T-cell (primary cell): ENCODE measurements at regions of chr6 and their contacts with region 1.

Region 1: GRCh38 chr6:90383196-90383822 is 86.7 kb upstream of the BACH2 start:
- DNase-seq: peak in 2 of 35 experiments; percentile 6 to 50
- ATAC-seq: peak; percentile 34 to 68 (median 64)
- H3K4me3 ChIP-seq: no peak overlapping the region
- H3K4me3 Mint-ChIP-seq: peak overlapping the region in 1 of 3 donors; percentile 45
- H3K27ac ChIP-seq: no peak overlapping the region
- H3K27ac Mint-ChIP-seq: peak overlapping the region; percentile 23 to 30
- H3K4me1 ChIP-seq: peaks cover 4 to 13% of the 10 kb centered on the region in 2 experiments
- H3K4me1 Mint-ChIP-seq: peaks cover 22 to 35% (median 25%) of the 10 kb centered on the region in 3 donors
- H3K27me3 ChIP-seq: no peaks in the 10 kb centered on the region
- H3K27me3 Mint-ChIP-seq: no peaks in the 10 kb centered on the region

Region 2: GRCh38 chr6:90368001-90368400 is 15.3 kb before region 1 on chr6:
- CTCF ChIA-PET with region 1: interaction called in 1 of 2 experiments, 3 read pairs
- POLR2A ChIA-PET with region 1: interaction called, 3 to 10 read pairs
- DNase-seq: no peak
- ATAC-seq: no peak
- H3K4me3 ChIP-seq: no peak overlapping the region
- H3K4me3 Mint-ChIP-seq: no peak overlapping the region
- H3K27ac ChIP-seq: no peak overlapping the region
- H3K27ac Mint-ChIP-seq: no peak overlapping the region
- H3K4me1 ChIP-seq: no peaks in the 10 kb centered on the region
- H3K4me1 Mint-ChIP-seq: peaks cover 7 to 20% (median 20%) of the 10 kb centered on the region in 3 donors
- H3K27me3 ChIP-seq: no peaks in the 10 kb centered on the region
- H3K27me3 Mint-ChIP-seq: no peaks in the 10 kb centered on the region